Endothelial cell of umbilical vein (primary cell): ENCODE measurements at regions of chr4 and their contacts with region 1.

Region 1: DNA sequence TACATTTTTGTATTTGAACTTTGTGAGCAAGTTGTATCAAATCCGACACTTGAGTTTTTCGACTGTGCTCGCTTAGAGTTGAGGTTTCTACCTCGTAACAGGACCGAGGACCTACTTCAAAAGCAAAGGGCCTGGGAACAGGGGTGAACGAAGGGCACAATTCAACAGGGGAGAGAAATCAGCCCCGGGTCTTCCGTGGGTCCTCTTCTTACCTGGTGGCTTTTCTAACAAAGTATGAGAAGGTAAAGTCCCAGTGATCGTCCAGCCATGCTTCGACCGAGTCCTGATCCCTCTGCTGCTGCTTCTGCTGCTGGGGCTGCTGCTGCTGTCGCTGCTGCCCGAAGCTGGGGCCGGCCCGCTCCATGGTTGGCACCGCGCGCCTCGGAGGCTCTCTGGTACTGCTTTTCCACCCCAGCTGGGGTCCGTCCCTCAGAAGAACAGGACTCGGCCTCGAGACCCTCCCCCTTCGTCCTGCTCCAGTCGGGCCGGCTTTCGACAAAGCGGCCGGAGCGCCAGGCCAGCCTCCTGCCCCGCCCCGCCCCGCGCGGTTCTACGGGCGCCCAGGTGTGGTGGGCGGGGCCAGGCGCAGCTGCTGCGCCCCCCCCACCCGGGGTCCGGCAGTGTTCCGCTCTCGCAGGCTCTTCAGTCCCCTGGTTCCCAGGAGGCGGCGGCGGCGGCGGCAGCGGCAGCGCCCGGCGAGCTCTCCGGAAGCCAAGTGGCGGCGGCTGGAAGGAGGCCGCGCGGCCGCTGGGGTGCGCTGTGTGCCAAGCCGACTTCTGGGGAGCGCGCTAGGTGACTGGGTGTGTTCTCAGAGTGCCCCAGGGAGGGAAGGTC is at the start of gene PDE5A:
- DNase-seq: peak; percentile 78
- H3K4me3 ChIP-seq: peak within 1 kb of the TSS; percentile 74 to 78 (median 78)
- H3K27ac ChIP-seq: no peak within 1 kb of the TSS
- H3K4me1 ChIP-seq: peaks cover 14% of the 10 kb centered on the region
- H3K27me3 ChIP-seq: peaks cover 0 to under 1% of the 10 kb centered on the region in 2 experiments
- CTCF ChIP-seq: peak; percentile 71 to 79
- POLR2A ChIP-seq: no peak
- total RNA-seq, gene PDE5A: 2.3 and 3.2 TPM in 2 replicates

Region 2: DNA sequence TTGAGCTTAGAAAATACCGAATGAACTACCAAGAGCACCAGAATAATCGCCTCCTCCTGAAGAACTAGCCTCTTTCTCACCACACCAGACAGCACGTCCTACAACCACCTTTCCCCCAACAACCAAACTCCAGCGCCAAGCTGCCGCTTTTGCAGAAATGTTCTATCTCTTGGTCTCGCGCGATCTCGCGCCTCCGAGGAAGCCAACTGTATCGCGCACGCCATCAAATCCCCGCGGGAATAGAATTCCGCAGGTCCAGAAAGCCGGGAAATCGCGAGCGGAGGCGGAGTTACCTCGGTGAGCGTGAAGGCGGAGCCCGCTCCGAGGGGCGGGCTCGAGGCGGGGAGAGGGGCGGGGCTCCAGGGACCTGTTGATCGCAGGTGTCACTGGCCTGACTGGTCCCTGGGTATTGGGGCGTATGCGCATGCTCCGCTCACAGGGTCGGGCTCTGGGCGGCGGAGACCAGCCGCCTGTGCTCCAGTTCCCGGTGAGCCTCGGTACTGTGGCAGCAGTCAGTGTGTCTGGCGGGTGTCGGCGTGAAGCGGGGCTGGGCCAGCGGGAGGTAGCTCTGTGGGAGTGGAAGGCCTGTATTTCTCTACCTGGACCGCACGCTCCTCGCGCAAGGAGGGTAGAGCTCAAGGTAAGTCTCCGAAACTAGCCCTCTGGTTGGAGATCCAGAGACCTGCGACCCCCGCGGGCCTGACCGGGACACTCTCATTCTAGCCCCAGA is 416.1 kb before region 1 on chr4 and contains the start of gene USP53:
- CTCF ChIA-PET with region 1: no interaction called
- POLR2A ChIA-PET with region 1: no interaction called
- dilution Hi-C with region 1: no loop called
- intact Hi-C with region 1: loop called (anchors 1 kb)
- DNase-seq: peak; percentile 99
- H3K4me3 ChIP-seq: peak within 1 kb of the TSS; percentile 58 to 99 (median 98)
- H3K27ac ChIP-seq: peak within 1 kb of the TSS; percentile 96
- H3K4me1 ChIP-seq: peaks cover 41% of the 10 kb centered on the region
- H3K27me3 ChIP-seq: no peaks in the 10 kb centered on the region
- CTCF ChIP-seq: no peak
- POLR2A ChIP-seq: peak; percentile 93
- total RNA-seq, gene USP53: 22.8 and 28.3 TPM in 2 replicates

Region 3: DNA sequence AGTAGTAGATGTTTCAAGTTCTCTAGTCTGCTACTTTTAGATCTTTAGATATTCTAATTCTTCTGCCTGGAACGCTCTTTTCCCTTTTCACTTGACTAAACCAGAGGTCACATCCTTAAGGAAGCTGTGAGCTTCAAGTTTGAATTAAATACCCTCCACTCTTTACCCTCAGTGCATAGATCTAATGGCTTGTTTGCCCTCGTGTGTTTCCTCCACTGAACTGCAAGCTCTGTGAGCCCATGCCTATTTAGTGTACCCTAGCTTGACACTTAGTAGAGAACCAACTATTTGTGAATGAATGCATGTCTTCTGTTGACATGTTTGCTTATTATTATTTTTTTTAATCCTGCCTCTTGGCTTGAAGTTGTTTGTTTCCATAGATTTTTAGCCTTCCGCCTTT is 138.2 kb before region 1 on chr4:
- CTCF ChIA-PET with region 1: interaction called, 13 read pairs
- POLR2A ChIA-PET with region 1: no interaction called
- dilution Hi-C with region 1: no loop called
- intact Hi-C with region 1: no loop called
- DNase-seq: peak; percentile 72
- H3K4me3 ChIP-seq: no peak overlapping the region
- H3K27ac ChIP-seq: no peak overlapping the region
- H3K4me1 ChIP-seq: no peaks in the 10 kb centered on the region
- H3K27me3 ChIP-seq: no peaks in the 10 kb centered on the region
- CTCF ChIP-seq: peak; percentile 11 to 53
- POLR2A ChIP-seq: no peak

Region 4: GRCh38 chr4:119615068-119615719 is 13.3 kb before region 1 on chr4:
- CTCF ChIA-PET with region 1: interaction called, 11 read pairs
- POLR2A ChIA-PET with region 1: no interaction called
- dilution Hi-C with region 1: no loop called
- intact Hi-C with region 1: no loop called
- DNase-seq: peak; percentile 21
- H3K4me3 ChIP-seq: no peak overlapping the region
- H3K27ac ChIP-seq: no peak overlapping the region
- H3K4me1 ChIP-seq: no peaks in the 10 kb centered on the region
- H3K27me3 ChIP-seq: no peaks in the 10 kb centered on the region
- CTCF ChIP-seq: no peak
- POLR2A ChIP-seq: no peak

Region 5: DNA sequence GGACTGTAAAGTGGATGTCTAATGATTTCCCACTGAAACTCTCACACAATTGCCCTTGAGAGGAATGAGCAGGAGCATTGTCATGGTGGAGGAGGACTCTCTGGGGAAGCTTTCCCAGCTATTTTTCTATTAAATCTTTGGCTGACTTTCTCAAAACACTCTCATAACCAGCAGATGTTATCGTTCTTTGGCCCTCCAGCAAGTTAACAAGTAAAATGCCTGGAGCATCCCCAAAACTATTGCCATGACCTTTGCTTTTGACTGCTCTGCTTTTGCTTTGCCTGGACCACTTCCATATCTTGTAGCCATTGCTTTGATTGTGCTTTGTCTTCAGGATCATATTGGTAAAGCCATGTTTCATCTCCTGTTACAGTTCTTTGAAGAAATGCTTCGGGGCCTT is 120.3 kb after region 1 on chr4:
- CTCF ChIA-PET with region 1: interaction called, 10 read pairs
- POLR2A ChIA-PET with region 1: no interaction called
- dilution Hi-C with region 1: no loop called
- intact Hi-C with region 1: no loop called
- DNase-seq: no peak
- H3K4me3 ChIP-seq: no peak overlapping the region
- H3K27ac ChIP-seq: no peak overlapping the region
- H3K4me1 ChIP-seq: no peaks in the 10 kb centered on the region
- H3K27me3 ChIP-seq: peaks cover 2 to 3% of the 10 kb centered on the region in 2 experiments
- CTCF ChIP-seq: no peak
- POLR2A ChIP-seq: no peak